Activated CD4-positive, alpha-beta T cell treated with anti-CD3 and anti-CD28 coated beads, Interleukin-2, amount 10 ng/mL, durations not matched to agents 24 days and 14 days (primary cell): ENCODE measurements at regions of chr12 and their contacts with region 1.

Region 1: GRCh38 chr12:6569312-6569711 is 1.2 kb upstream of the NOP2 start:
- DNase-seq: no peak
- H3K4me3 Mint-ChIP-seq: peak overlapping the region; percentile 98
- H3K27ac Mint-ChIP-seq: no peak overlapping the region
- H3K4me1 Mint-ChIP-seq: peaks cover 28% of the 10 kb centered on the region
- H3K27me3 Mint-ChIP-seq: no peaks in the 10 kb centered on the region

Region 2: DNA sequence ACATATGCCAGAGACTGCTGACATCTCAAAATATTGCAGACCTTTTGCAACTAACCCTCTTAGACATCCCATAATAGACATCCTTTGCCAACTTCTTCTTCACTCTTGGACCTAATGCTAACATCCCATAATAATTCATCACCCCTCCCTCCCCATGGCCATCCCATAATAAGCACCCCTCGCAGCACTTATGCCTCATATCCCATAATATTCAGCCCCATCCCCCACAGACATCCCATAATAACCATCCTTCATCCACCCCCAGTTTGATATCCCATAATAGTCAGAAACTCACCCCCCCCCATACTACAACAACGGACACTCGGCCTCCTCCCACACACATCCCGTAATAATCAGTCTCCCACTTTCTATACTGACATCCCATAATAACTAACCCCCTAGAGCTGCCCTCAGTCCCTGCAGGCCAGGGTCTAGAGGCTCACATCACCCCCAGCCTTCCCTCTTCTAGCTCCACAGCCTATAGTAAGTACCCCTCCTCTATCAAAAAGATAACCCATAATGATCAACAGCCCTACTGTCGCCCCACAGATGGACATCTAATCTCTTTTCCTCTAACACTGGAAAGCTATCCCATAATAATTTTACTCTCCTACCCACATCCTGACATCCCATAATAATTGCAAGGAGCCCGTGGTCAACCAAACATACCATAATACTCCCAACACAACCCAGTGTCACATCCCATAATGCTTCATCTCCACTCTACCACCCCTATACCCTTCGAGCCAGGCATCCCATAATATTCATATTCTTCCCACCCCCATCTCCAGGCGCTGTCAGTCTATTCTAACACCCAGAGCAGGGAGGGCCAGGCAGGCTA is 38.7 kb after region 1 on chr12:
- intact Hi-C with region 1: loop called (anchors 2 kb)
- DNase-seq: peak; percentile 89
- H3K4me3 Mint-ChIP-seq: no peak overlapping the region
- H3K27ac Mint-ChIP-seq: no peak overlapping the region
- H3K4me1 Mint-ChIP-seq: peaks cover 45% of the 10 kb centered on the region
- H3K27me3 Mint-ChIP-seq: no peaks in the 10 kb centered on the region